Dendritic cell treated with granulocyte-macrophage colony-stimulating factor and Interleukin-4, amounts not matched to agents 40 ng/mL and 50 ng/mL, for 4 days (primary cell): ENCODE measurements at regions of chr12 and their contacts with region 1.

Region 1: GRCh38 chr12:4215229-4216186 is 58.1 kb upstream of the CCND2 start:
- H3K4me3 Mint-ChIP-seq: peak overlapping the region; percentile 14
- H3K27ac Mint-ChIP-seq: peak overlapping the region; percentile 76
- H3K4me1 Mint-ChIP-seq: peaks cover 56% of the 10 kb centered on the region
- H3K27me3 Mint-ChIP-seq: peaks cover 86% of the 10 kb centered on the region

Region 2: GRCh38 chr12:4107436-4107878 is 108.1 kb before region 1 on chr12:
- intact Hi-C with region 1: loop called (anchors 5 kb)
- H3K4me3 Mint-ChIP-seq: peak overlapping the region; percentile 13
- H3K27ac Mint-ChIP-seq: no peak overlapping the region
- H3K4me1 Mint-ChIP-seq: peaks cover 51% of the 10 kb centered on the region
- H3K27me3 Mint-ChIP-seq: peaks cover 75% of the 10 kb centered on the region

Region 3: GRCh38 chr12:4153343-4153892 is 62.1 kb before region 1 on chr12:
- intact Hi-C with region 1: loop called (anchors 10 kb)
- H3K4me3 Mint-ChIP-seq: no peak overlapping the region
- H3K27ac Mint-ChIP-seq: peak overlapping the region; percentile 65
- H3K4me1 Mint-ChIP-seq: peaks cover 50% of the 10 kb centered on the region
- H3K27me3 Mint-ChIP-seq: peaks cover 32% of the 10 kb centered on the region